Activated CD8-positive, alpha-beta T cell treated with anti-CD3 and anti-CD28 coated beads, Interleukin-2, amount 10 ng/mL, durations not matched to agents 7 days and 5 days (primary cell): ENCODE measurements at regions of chr12 and their contacts with region 1.

Region 1: DNA sequence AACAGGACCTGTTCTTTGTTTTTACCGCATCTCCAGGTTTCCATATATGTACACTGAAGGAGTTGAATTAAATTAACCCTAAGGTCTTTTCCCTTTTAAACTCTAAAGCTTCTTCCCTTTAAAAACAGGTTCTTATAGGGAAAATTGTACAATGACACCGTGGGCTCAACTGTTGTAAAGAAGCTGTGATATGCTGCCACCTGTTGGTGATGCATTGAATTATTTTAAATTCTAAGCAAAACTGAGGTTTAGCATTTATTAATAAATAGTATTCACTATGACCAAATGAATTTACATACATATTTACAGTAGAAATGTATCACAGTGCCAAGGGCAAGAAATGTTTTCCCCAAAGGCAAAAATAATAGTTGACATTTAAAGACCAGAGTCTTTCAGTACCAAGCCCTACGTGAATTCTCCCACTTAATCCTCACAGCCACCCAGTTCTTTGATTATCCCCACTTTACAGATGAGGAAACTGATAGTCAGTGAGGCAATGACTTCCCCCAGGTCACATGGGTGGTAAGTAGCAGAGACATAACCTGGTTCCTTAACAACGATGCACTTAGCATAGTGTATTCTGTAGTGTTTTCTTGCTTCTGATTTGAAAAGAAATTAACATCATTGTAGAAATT is 35.7 kb upstream of the TMEM263 start:
- DNase-seq: peak; percentile 39
- ATAC-seq: no peak
- H3K4me3 Mint-ChIP-seq: no peak overlapping the region
- H3K27ac Mint-ChIP-seq: no peak overlapping the region
- H3K4me1 Mint-ChIP-seq: peaks cover 9% of the 10 kb centered on the region
- H3K27me3 Mint-ChIP-seq: peaks cover 20% of the 10 kb centered on the region

Region 2: DNA sequence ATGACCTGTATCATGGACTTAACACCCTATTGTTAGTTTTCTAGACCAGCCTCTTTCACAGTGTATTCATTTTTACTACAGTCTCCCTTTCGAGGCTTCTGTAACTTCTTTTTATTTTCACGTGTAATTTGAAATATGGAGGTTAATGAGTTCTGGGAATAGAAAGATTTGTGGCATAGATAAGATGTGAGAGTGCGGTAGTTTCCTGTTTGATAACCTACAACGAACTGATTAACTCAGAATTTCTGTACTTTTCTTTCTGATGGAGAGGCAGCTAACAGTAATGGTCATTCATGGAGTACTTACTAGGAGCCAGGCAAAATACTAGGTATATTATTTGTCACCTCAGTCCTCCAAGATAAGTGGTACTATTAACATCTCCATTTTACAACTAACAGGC is 541.2 kb before region 1 on chr12:
- CTCF ChIA-PET with region 1: interaction called, 24 read pairs
- POLR2A ChIA-PET with region 1: no interaction called
- DNase-seq: no peak
- ATAC-seq: peak; percentile 49
- H3K4me3 Mint-ChIP-seq: no peak overlapping the region
- H3K27ac Mint-ChIP-seq: peak overlapping the region; percentile 40
- H3K4me1 Mint-ChIP-seq: peaks cover 22% of the 10 kb centered on the region
- H3K27me3 Mint-ChIP-seq: no peaks in the 10 kb centered on the region

Region 3: GRCh38 chr12:106386813-106387535 is 533.1 kb before region 1 on chr12:
- CTCF ChIA-PET with region 1: interaction called, 24 read pairs
- POLR2A ChIA-PET with region 1: no interaction called
- DNase-seq: no peak
- ATAC-seq: no peak
- H3K4me3 Mint-ChIP-seq: no peak overlapping the region
- H3K27ac Mint-ChIP-seq: no peak overlapping the region
- H3K4me1 Mint-ChIP-seq: peaks cover 5% of the 10 kb centered on the region
- H3K27me3 Mint-ChIP-seq: no peaks in the 10 kb centered on the region

Region 4: DNA sequence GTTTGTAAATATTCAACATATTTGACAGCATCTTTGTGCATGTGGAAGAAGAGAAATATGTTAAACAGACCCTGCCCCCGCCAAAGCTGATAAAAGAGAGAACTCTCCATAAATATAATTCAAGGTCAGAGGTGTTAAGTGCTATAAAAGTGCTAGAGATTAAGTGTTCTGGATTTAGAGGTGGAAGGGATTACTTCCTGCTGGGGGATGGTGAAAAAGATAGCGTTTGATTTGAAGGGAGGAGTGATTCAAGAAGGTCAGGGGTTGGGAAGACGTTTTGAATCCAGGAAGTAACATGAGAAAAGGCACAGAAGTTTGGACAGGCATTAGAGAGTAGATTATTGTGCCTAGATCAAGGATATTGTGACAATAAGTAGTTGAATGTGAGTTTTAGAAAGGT is 115.4 kb before region 1 on chr12:
- CTCF ChIA-PET with region 1: no interaction called
- POLR2A ChIA-PET with region 1: no interaction called
- DNase-seq: no peak
- ATAC-seq: no peak
- H3K4me3 Mint-ChIP-seq: no peak overlapping the region
- H3K27ac Mint-ChIP-seq: no peak overlapping the region
- H3K4me1 Mint-ChIP-seq: no peaks in the 10 kb centered on the region
- H3K27me3 Mint-ChIP-seq: no peaks in the 10 kb centered on the region

Region 5: DNA sequence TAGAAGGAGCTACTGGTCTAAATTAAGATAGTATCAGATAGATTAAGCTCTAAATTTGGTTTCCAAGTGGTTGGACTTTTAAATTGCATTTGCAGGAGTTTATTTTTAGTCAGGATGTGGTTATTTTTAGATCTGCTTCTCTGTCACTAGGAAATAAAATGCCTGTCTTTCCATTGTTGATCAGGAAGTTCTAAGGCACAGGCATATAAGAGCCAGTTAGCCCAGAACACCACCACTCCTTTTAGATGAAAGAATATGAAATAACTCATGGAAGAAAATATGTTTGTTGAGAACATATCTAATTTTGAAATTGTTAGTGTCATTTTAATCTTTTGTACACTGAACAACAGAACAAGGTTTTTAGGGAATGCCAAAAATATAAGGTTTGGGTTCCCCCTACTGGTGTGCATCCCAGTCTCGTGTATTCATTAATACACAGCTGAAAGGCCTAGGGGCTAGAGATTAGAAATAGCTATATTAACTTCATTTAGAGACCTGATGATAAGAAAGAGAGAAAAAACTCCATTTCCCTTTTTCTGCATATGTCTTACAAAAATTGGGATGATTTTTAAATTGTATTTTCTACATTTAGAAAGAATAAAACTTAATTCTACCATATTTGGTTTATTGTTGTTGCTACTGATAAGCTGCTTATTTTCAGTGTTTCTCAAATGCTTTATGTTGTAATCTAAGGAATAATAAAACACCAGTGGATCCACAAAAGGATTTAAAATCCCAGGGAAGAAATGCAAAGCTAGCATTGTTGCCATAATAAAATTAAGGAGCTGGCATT is 78.3 kb before region 1 on chr12:
- CTCF ChIA-PET with region 1: interaction called, 11 read pairs
- POLR2A ChIA-PET with region 1: no interaction called
- DNase-seq: peak; percentile 41
- ATAC-seq: no peak
- H3K4me3 Mint-ChIP-seq: no peak overlapping the region
- H3K27ac Mint-ChIP-seq: no peak overlapping the region
- H3K4me1 Mint-ChIP-seq: peaks cover 17% of the 10 kb centered on the region
- H3K27me3 Mint-ChIP-seq: no peaks in the 10 kb centered on the region

Region 6: DNA sequence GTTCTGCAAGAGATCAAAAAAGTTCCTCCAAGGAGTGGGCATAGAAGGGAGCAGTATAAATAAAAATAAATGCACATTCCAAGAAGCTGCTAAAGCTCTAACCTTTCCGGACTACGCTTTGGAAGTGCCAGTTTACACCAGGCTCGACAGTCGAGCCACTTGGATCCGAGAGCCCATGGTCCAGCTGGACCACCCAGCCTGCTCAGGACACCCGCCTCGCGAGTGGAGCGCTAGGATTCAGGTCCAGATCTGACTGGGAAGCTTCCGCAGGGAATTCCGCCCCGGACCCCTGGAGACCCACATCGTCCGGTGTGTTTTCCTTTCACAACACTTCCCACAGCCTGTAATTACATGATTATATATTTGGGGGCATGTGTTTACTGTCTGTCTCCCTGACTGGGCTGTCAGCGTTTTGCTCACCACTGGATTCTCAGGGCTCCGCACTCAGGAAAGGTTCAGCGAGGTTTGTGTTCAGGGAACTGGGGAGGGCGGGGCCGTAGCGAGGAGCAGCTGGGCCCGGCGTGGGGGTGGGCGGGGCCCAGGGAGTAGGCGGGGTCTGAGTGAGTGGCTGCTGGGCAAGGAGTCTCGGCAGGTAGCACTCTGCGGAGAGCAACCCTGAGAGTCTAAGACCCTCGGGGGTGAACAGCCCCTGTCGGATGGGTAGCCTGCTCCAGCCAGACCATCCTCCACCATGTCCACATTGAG is 16.6 kb before region 1 on chr12:
- CTCF ChIA-PET with region 1: interaction called, 50 read pairs
- POLR2A ChIA-PET with region 1: no interaction called
- DNase-seq: peak; percentile 81
- ATAC-seq: peak; percentile 100
- H3K4me3 Mint-ChIP-seq: peak overlapping the region; percentile 52
- H3K27ac Mint-ChIP-seq: no peak overlapping the region
- H3K4me1 Mint-ChIP-seq: peaks cover 19% of the 10 kb centered on the region
- H3K27me3 Mint-ChIP-seq: peaks cover 40% of the 10 kb centered on the region

Region 7: DNA sequence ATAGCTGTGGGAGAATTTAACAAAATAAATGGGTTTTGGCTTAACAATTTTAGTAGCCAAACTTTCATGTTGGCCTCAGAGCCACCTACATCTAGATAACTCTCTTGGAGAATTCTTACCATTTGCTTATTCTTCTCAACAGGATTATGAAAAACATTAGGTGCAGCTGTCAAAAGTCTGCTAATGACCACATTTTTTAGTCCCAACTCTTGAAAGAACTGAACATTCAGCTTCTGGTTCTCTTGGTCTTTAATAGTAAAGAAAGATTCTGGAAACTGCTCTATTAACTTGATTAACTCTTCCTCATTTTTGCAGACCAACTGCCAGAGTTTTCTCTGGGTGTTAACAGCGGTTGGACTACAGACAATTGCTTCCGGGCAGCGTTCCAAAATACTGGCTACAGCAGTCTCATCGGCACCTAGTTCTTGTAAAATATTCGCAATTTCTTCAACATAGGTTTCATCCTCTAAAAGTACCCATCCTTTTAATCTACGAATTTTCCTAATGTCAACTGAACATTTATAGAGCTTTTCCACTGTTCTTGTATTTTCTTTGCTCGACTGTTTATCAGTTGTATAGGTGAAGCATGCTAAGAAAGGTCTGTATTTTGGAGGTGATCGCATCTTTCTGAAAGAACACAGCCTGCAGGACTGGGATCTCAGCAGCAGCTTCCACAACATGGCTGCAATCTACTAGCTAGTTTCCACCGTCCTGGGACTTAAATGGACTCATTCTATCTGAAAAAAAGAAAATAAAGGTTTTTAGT is 58.2 kb after region 1 on chr12:
- CTCF ChIA-PET with region 1: no interaction called
- POLR2A ChIA-PET with region 1: no interaction called
- DNase-seq: no peak
- ATAC-seq: no peak
- H3K4me3 Mint-ChIP-seq: no peak overlapping the region
- H3K27ac Mint-ChIP-seq: no peak overlapping the region
- H3K4me1 Mint-ChIP-seq: no peaks in the 10 kb centered on the region
- H3K27me3 Mint-ChIP-seq: no peaks in the 10 kb centered on the region